ENCODE measurements at regions of chr14 and their contacts with region 1.

Region 1: DNA sequence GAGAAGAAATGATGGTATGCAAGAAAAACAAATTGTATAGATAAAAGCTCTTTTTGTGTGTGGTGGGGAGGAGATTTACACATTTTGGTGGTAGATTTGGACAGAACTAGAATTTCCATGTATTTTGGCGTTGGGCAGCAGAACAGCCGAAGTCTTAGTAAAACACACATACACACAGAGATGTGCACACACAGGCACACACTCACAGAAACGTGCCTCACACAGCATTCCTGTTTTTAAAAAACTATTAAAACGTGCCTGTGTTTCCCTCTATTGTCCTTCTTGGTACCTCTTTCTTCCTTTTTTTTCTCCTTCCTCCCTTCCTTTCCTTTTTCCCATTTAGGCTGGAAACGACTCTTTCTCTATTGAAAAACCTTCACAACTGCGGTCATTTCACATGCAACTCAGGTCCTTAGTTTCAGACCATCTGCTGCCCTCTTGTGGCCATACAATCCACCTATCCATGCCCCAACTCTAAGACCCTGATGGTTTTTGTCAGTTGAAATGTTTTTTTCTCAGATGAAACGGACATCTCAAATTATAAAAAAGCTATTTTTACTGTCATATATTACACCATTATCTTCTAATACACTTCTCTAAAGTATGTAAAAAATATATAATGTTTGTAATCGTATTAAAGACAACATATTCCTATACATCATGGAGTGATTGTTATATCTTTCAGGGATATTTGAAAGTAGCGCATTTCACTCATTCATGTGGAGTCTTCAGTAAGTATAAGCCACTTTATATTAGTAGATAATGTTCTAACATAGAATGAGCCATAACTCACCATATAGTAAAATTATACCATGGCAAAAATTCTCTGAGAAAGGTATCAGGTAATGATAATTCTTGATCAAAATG is 386.7 kb upstream of the NOVA1 start:
- DNase-seq: peak; percentile 57
- H3K4me3 ChIP-seq: no peak overlapping the region
- H3K27ac ChIP-seq: no peak overlapping the region
- H3K4me1 ChIP-seq: no peaks in the 10 kb centered on the region
- H3K27me3 ChIP-seq: no peaks in the 10 kb centered on the region
- CTCF ChIP-seq: peak; percentile 67
- POLR2A ChIP-seq: no peak

Region 2: GRCh38 chr14:26276757-26277156 is 707.8 kb before region 1 on chr14:
- CTCF ChIA-PET with region 1: no interaction called
- POLR2A ChIA-PET with region 1: no interaction called
- dilution Hi-C with region 1: no loop called
- intact Hi-C with region 1: loop called (anchors 10 kb)
- DNase-seq: peak; percentile 31
- H3K4me3 ChIP-seq: no peak overlapping the region
- H3K27ac ChIP-seq: no peak overlapping the region
- H3K4me1 ChIP-seq: no peaks in the 10 kb centered on the region
- H3K27me3 ChIP-seq: no peaks in the 10 kb centered on the region
- CTCF ChIP-seq: peak; percentile 38 to 54
- POLR2A ChIP-seq: no peak

Region 3: GRCh38 chr14:26598081-26598795 is 386.3 kb before region 1 on chr14:
- CTCF ChIA-PET with region 1: no interaction called
- POLR2A ChIA-PET with region 1: no interaction called
- dilution Hi-C with region 1: no loop called
- intact Hi-C with region 1: loop called (anchors 5 kb)
- DNase-seq: peak; percentile 92
- H3K4me3 ChIP-seq: peak overlapping the region; percentile 55 to 98 (median 98)
- H3K27ac ChIP-seq: no peak overlapping the region
- H3K4me1 ChIP-seq: peaks cover 5% of the 10 kb centered on the region
- H3K27me3 ChIP-seq: peaks cover 8 to 18% of the 10 kb centered on the region in 2 experiments
- CTCF ChIP-seq: no peak
- POLR2A ChIP-seq: no peak

Region 4: DNA sequence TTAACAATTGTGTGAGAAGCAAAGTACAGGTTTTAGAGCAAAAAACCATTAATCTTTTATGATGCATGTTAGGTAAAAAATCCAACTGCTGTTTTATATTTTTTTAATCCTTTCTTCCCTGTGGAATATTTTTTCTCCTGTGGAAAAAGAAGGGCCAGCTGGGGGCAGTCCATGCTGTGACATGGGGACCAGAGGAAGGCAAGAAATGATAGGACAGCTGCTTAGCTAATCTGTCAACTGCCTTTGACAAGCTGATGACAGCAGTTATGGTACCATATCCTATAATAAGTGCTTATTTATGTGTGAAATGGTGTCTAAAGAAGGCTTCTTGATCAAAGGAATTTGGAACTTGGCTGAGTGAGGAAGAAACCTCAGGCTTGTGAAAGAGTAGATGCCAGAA is 65.6 kb after region 1 on chr14:
- CTCF ChIA-PET with region 1: no interaction called
- POLR2A ChIA-PET with region 1: no interaction called
- dilution Hi-C with region 1: no loop called
- intact Hi-C with region 1: no loop called
- DNase-seq: no peak
- H3K4me3 ChIP-seq: no peak overlapping the region
- H3K27ac ChIP-seq: no peak overlapping the region
- H3K4me1 ChIP-seq: no peaks in the 10 kb centered on the region
- H3K27me3 ChIP-seq: no peaks in the 10 kb centered on the region
- CTCF ChIP-seq: no peak
- POLR2A ChIP-seq: no peak

Region 5: GRCh38 chr14:27315477-27315876 is 330.9 kb after region 1 on chr14:
- CTCF ChIA-PET with region 1: no interaction called
- POLR2A ChIA-PET with region 1: no interaction called
- dilution Hi-C with region 1: no loop called
- intact Hi-C with region 1: no loop called
- DNase-seq: no peak
- H3K4me3 ChIP-seq: no peak overlapping the region
- H3K27ac ChIP-seq: no peak overlapping the region
- H3K4me1 ChIP-seq: no peaks in the 10 kb centered on the region
- H3K27me3 ChIP-seq: no peaks in the 10 kb centered on the region
- CTCF ChIP-seq: no peak
- POLR2A ChIP-seq: no peak

Region 6: GRCh38 chr14:28608851-28609828 is 1624.6 kb after region 1 on chr14:
- CTCF ChIA-PET with region 1: no interaction called
- POLR2A ChIA-PET with region 1: no interaction called
- dilution Hi-C with region 1: no loop called
- intact Hi-C with region 1: loop called (anchors 10 kb)
- DNase-seq: peak; percentile 54
- H3K4me3 ChIP-seq: no peak overlapping the region
- H3K27ac ChIP-seq: no peak overlapping the region
- H3K4me1 ChIP-seq: no peaks in the 10 kb centered on the region
- H3K27me3 ChIP-seq: peaks cover 0 to 3% of the 10 kb centered on the region in 2 experiments
- CTCF ChIP-seq: peak; percentile 62 to 71
- POLR2A ChIP-seq: no peak

Measured in endothelial cell of umbilical vein (primary cell).